HEK293 (cell line): ENCODE measurements at regions of chr20 and their contacts with region 1.

Region 1: GRCh38 chr20:2523919-2524708 is 12.3 kb upstream of the TMC2 start:
- H3K4me3 ChIP-seq: peak overlapping the region; percentile 54
- H3K27ac ChIP-seq: peak overlapping the region; percentile 83
- H3K4me1 ChIP-seq: no peaks in the 10 kb centered on the region; the same call in 1 of the 2 replicates
- CTCF ChIP-seq: peak; percentile 94

Region 2: DNA sequence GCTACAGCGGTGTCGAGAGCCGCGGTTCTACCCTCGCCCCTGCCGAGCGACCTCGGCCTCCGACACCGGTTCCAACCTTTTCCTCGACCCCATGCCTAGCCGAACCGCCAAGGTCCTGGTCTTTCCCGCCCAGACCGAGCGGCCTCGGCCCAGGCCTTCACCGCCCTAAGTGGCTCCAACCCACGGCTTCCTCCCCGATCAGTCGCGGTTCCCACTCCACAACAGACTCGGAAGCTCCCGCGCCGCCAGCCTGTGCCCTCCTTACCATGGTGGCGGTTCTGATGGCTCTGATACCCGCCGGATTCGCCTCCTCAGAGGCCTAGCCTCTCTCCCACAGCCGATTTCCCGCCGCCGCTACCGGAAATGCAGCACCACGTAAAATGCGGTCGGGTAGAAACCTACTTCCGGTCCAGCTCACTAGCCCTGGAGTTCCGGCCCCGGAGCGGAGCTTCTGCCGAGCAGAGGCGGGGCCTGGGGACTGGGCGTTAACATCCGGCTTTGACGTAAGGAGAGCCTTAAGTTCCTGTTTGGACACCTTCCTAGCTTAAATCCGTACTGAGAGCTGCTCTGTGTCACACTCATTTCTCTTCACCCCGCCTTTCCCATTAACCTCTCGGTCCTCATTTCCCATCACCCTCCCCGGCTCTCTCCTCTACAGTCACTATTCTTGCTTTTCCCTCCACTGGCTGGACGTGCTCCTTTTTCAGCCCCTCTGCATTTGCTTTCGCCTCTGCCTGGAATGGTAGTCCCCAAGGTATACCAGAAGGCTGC is 53.5 kb before region 1 on chr20 and contains the start of gene SNRPB:
- CTCF ChIA-PET with region 1: interaction called, 14 read pairs
- POLR2A ChIA-PET with region 1: interaction called, 20 read pairs
- H3K4me3 ChIP-seq: peak within 1 kb of the TSS; percentile 74
- H3K27ac ChIP-seq: peak within 1 kb of the TSS; percentile 100
- H3K4me1 ChIP-seq: no peaks in the 10 kb centered on the region; the same call in 1 of the 2 replicates
- CTCF ChIP-seq: peak; percentile 14; the same call in 1 of the 2 replicates

Region 3: GRCh38 chr20:2508631-2509467 is 15.3 kb before region 1 on chr20 and contains the start of gene ZNF343:
- CTCF ChIA-PET with region 1: interaction called, 171 read pairs
- POLR2A ChIA-PET with region 1: interaction called, 9 read pairs
- H3K4me3 ChIP-seq: peak within 1 kb of the TSS; percentile 76
- H3K27ac ChIP-seq: peak within 1 kb of the TSS; percentile 93
- H3K4me1 ChIP-seq: peaks cover 4% of the 10 kb centered on the region; the same call in 1 of the 2 replicates
- CTCF ChIP-seq: no peak; the same call in 1 of the 2 replicates

Region 4: GRCh38 chr20:2538931-2539720 is 15.0 kb after region 1 on chr20:
- CTCF ChIA-PET with region 1: interaction called, 26 read pairs
- POLR2A ChIA-PET with region 1: interaction called, 3 read pairs
- H3K4me3 ChIP-seq: no peak overlapping the region
- H3K27ac ChIP-seq: no peak overlapping the region
- H3K4me1 ChIP-seq: 0 out of 2 replicates have a peak, but pooled peaks cover 5% of the 10 kb centered on the region
- CTCF ChIP-seq: no peak